AG04449 (cell line): ENCODE measurements at regions of chr11 and their contacts with region 1.

Region 1: DNA sequence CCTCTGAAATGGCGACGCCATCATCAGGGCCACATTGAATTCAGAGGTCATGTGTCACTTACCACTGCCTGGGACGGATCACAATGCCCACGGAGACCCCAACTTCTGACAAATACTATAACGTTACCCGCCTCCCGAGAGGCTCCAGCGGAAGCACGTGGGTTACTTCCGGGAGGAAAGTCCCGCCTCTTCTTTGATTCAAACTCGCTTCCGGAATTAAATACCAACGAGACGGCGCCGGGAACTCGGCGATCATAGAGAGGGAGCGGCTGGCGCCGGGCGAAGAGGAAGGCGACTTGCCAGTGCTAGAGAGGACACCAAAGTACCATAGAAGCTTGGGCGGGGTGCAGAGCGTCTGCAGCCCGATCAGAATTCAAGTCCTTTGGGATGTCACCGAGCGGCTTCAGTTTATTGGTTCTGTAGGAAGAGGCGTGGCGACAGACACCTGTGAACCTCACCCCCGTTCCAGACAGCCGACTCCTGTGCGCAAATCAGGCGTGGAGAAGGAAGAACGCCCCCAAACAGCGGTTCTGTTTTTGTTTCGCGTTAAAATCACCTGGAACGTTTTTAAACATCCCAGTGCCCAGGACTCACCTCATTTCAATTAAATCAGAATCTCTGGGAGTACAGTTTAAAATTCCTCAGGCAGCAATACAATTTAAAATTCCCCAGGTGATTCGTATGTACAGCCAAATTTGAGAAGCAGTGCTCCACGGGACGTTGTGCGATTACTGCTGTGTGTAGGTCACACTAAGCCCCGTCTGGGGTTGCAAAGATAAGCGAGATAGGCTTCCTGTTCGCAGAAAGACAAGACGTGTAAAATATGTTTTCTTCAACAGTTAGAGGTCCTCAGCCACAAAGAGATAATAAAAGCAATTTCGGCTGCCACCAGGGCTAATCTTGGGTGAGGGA is at the start of gene TIMM10:
- DNase-seq: peak; percentile 68
- H3K4me3 ChIP-seq: peak within 1 kb of the TSS; percentile 96
- CTCF ChIP-seq: no peak

Region 2: DNA sequence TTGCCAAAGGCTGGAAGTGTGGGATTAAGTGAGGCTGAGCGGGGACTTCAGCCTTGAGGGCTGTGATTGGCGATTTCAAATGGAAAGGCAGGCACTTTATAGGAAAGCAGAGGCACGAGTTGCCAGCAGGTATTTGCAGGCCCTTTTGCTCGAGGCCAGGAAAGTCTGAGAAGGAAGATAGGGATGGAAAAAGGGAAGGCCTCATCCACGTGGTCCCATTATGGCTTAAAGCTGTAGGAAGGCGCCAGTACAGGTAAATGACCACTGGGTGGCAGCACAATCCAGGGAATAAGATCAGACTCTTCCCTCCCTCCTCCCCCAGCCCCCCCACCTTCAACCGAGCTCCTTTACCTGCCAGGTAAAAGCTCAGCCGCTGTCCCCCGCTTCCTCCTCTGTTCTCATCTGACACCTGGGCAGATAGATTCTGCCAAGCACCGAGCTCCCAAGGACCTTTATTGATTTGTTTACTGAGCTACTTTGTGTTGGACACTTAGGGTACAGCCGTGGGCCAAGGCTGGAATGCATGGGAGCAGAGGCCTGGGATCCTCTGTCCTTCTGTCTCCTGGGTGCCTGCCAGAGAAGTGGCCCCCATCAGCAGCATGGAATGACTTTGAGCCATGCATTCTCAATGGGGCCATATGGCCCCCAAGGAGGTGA is 185.2 kb before region 1 on chr11:
- CTCF ChIA-PET with region 1: interaction called, 161 read pairs
- POLR2A ChIA-PET with region 1: no interaction called
- DNase-seq: no peak
- H3K4me3 ChIP-seq: no peak overlapping the region
- CTCF ChIP-seq: peak; percentile 72

Region 3: GRCh38 chr11:57432714-57433163 is 98.1 kb before region 1 on chr11:
- CTCF ChIA-PET with region 1: interaction called, 14 read pairs
- POLR2A ChIA-PET with region 1: no interaction called
- DNase-seq: peak; percentile 47
- H3K4me3 ChIP-seq: no peak overlapping the region
- CTCF ChIP-seq: no peak

Region 4: GRCh38 chr11:57474017-57474802 is 56.6 kb before region 1 on chr11:
- CTCF ChIA-PET with region 1: interaction called, 36 read pairs
- POLR2A ChIA-PET with region 1: no interaction called
- DNase-seq: no peak
- H3K4me3 ChIP-seq: no peak overlapping the region
- CTCF ChIP-seq: no peak

Region 5: GRCh38 chr11:57499413-57499982 is 31.4 kb before region 1 on chr11:
- CTCF ChIA-PET with region 1: interaction called, 421 read pairs
- POLR2A ChIA-PET with region 1: no interaction called
- DNase-seq: no peak
- H3K4me3 ChIP-seq: peak overlapping the region; percentile 45
- CTCF ChIP-seq: no peak

Region 6: DNA sequence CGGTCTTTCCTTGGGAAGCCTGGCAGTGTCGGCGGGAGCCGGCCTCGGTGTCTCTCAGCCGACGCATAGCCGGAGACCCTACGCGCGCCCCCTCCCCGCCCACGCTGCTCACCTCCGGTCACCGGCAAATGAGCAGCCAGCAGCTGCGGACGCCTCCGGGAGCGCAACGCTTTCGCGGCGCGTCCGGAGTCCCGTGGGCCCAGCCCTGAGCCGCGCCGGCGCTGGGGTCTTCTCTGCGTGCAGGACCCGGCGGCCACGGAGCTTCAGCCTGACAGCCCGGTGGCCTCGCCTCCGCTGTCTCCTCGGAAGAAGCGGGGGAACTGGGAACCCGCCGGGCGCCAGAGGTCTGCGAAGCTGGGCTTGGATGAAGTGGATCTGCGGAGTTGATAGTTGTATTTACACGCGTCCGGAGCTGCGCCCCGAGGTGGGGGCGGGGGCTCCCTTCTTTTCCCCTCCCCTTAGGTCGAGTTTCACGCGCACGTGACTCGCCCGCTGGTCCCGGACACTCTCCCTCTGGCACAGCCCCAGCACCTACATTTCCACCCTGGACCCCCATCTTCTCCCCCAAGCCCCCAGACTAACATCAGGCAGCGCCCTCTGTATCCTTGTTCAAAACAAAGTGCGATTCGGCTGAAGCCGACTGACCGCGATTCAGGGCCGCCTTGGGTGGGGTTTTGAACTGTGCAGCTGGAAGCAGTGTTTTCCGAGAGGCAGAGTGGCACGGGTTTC is 15.4 kb before region 1 on chr11 and contains the start of gene SLC43A1:
- CTCF ChIA-PET with region 1: interaction called, 129 read pairs
- POLR2A ChIA-PET with region 1: interaction called, 5 read pairs
- DNase-seq: no peak
- H3K4me3 ChIP-seq: peak within 1 kb of the TSS; percentile 85
- CTCF ChIP-seq: peak; percentile 0

Region 7: GRCh38 chr11:57842873-57843272 is 312.0 kb after region 1 on chr11:
- CTCF ChIA-PET with region 1: no interaction called
- POLR2A ChIA-PET with region 1: no interaction called
- DNase-seq: no peak
- H3K4me3 ChIP-seq: no peak overlapping the region
- CTCF ChIP-seq: no peak

Region 8: GRCh38 chr11:57903564-57904123 is 372.8 kb after region 1 on chr11:
- CTCF ChIA-PET with region 1: no interaction called
- POLR2A ChIA-PET with region 1: no interaction called
- DNase-seq: no peak
- H3K4me3 ChIP-seq: no peak overlapping the region
- CTCF ChIP-seq: no peak